Sciatic nerve (tissue), 2 donors: ENCODE measurements at regions of chr14 and their contacts with region 1.

Region 1: DNA sequence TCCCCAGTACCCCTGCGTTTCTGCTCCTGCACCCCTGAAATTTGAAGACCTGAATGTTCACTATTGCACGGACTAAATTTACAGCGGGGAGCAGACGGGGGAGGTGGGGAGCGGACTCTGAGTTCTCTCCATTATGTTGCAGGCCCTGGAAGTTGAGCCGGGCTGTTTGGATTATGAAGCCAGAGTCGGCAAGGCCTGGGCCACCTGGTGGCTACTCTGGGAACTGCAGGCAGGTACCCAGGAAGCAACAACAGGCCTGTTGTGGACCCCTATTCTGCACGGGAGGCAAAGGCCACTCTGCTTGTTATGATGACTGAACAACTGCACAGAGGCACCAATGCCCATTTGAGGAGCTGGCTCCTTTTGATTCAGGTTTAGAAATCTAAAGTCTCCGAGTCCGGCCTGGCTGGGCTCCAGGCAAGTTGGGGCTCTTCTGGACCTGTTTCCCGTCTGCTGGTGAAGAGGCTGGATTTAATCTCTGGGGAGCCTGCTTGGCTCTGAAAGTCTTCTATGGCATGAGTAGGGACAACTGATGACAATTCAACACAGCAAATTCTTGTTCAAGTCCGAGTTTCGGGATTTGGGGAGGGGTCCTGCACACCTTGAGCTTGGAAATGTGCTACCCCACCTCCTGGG is 34.1 kb upstream of the FAM181A start:
- DNase-seq: peak; percentile 89
- ATAC-seq: peak; percentile 81

Region 2: GRCh38 chr14:93655078-93655750 is 237.8 kb before region 1 on chr14:
- intact Hi-C with region 1: loop called (anchors 10 kb)
- DNase-seq: no peak
- ATAC-seq: peak; percentile 32

Region 3: GRCh38 chr14:93870377-93870776 is 22.7 kb before region 1 on chr14:
- intact Hi-C with region 1: no loop called
- DNase-seq: no peak
- ATAC-seq: no peak

Region 4: DNA sequence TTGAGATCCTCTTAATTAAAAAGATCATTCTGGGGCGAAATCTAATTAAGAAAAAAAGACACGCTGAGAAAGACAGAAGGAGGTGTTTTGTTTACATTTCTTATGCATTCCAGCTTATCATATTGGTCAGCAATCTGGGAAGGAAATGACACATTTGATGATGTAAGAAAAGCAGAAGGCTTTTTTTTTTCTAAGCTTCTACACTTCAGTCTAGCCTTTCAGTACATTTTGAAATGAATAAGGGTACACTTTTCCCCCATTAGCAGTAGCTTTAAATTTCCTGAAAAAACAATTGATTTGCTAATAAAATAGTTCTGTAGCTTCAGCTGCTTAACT is 882.8 kb after region 1 on chr14:
- intact Hi-C with region 1: no loop called
- DNase-seq: no peak
- ATAC-seq: no peak